Lower leg skin (tissue), 4 donors: ENCODE measurements at regions of chr2 and their contacts with region 1.

Region 1: DNA sequence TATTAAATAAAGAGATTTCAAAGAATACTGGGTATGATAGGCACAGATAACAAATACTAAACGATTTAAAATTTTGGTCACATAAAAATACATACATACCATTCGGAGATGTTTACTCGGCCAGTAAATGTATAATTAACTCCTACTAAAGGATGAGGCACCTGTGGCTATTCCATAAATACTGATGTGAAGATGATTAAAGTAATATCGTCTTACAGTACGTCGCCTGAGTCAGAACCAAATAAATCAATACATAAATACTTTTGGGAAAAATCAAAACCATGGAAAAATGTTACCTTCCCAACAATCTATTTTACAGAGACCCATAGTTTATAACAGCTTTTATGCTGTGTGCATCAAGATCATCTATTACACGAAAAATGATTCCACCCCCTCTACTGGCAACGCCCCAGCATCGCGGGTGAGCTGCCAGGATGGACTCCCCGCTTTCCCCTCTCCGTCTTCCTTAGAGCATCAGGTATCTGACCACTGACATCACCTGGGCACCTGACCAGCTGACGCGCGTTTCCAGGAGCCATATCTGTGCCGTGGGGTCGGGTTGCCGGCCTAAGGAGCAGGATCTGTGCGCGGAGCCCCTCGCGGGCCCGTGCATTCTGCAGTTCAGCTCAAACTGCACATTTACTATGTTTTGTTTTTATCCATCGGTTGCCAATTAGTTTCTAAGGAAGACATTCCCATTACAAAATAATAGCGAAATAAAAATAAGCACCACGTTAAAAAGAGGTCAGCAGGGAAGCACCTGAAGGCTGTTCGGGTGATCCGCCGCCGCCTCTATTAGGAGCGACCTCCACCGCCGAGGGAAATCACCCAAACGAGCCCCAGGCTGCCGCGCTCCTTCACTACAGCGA is 901 bp downstream of the ICA1L start:
- DNase-seq: peak; percentile 32 to 90
- H3K4me3 ChIP-seq: peak overlapping the region; percentile 60
- CTCF ChIP-seq: no peak
- POLR2A ChIP-seq: no peak

Region 2: GRCh38 chr2:202588647-202589581 is 281.8 kb before region 1 on chr2:
- intact Hi-C with region 1: loop called (anchors 10 kb)
- DNase-seq: peak; percentile 66 to 87
- H3K4me3 ChIP-seq: no peak overlapping the region
- CTCF ChIP-seq: peak in 2 of 3 donors; percentile 30 to 93
- POLR2A ChIP-seq: no peak

Region 3: GRCh38 chr2:202801544-202801943 is 69.1 kb before region 1 on chr2:
- intact Hi-C with region 1: no loop called
- DNase-seq: no peak
- H3K4me3 ChIP-seq: no peak overlapping the region
- CTCF ChIP-seq: no peak
- POLR2A ChIP-seq: no peak